AG04450 (cell line): ENCODE measurements at regions of chr1 and their contacts with region 1.

Region 1: GRCh38 chr1:119275145-119276134 is 93.1 kb upstream of the HAO2 start:
- DNase-seq: peak; percentile 32
- H3K4me3 ChIP-seq: no peak overlapping the region
- H3K27ac ChIP-seq: no peak overlapping the region
- H3K27me3 ChIP-seq: no peaks in the 10 kb centered on the region
- CTCF ChIP-seq: peak; percentile 95

Region 2: DNA sequence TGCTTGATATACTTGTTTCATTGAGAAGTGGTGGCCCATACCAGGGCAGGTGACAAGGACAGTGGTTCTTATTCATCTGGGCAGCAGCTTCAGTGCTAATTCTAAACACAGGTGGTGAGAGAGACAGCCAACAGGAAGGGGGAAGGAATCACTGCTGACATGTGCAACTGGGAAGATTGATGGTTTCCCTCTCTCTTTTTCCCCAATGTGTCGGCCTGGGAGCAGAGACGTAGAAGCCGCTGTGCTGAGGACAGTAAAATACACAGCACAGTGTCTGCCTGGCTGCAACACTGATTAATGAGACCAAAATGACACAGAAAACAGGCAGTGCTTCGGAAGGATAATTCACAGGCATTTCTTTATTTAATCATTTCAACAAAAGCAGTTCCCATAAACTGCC is 183.8 kb before region 1 on chr1:
- CTCF ChIA-PET with region 1: no interaction called
- POLR2A ChIA-PET with region 1: no interaction called
- DNase-seq: no peak
- H3K4me3 ChIP-seq: no peak overlapping the region
- H3K27ac ChIP-seq: no peak overlapping the region
- H3K27me3 ChIP-seq: no peaks in the 10 kb centered on the region
- CTCF ChIP-seq: no peak

Region 3: GRCh38 chr1:119140177-119141019 is 135.0 kb before region 1 on chr1 and contains the start of gene WARS2:
- CTCF ChIA-PET with region 1: interaction called, 10 read pairs
- POLR2A ChIA-PET with region 1: no interaction called
- DNase-seq: peak; percentile 93
- H3K4me3 ChIP-seq: peak within 1 kb of the TSS; percentile 78
- H3K27ac ChIP-seq: peak within 1 kb of the TSS; percentile 99
- H3K27me3 ChIP-seq: no peaks in the 10 kb centered on the region
- CTCF ChIP-seq: no peak
- polyA plus RNA-seq, gene WARS2: 12.4 and 12.6 TPM in 2 replicates

Region 4: DNA sequence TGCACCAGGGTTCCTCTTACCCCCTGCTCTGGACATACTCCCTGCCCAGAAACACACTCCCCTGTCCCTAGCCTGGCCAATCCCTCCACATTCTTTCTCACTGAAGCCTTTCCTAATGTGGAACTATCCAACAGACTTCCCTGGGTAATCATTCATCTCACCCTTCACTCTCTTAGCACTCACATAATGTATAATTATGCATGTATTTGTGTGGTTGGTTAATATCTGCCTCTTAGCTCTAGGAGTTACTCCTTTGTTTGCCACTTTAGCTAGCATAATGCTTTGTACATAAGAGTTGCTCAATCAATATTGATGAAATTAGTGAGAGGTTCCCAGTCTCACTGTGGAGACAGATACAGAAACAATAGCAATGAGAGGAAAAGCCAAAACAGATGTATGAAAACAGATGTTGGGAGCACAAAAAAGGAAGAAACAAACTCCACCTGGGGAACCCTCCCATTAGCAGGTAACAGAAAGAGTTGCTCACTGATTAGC is 58.1 kb before region 1 on chr1:
- CTCF ChIA-PET with region 1: interaction called, 10 read pairs
- POLR2A ChIA-PET with region 1: no interaction called
- DNase-seq: no peak
- H3K4me3 ChIP-seq: no peak overlapping the region
- H3K27ac ChIP-seq: no peak overlapping the region
- H3K27me3 ChIP-seq: no peaks in the 10 kb centered on the region
- CTCF ChIP-seq: no peak

Region 5: GRCh38 chr1:119286587-119287181 is 11.2 kb after region 1 on chr1:
- CTCF ChIA-PET with region 1: interaction called, 12 read pairs
- POLR2A ChIA-PET with region 1: no interaction called
- DNase-seq: no peak
- H3K4me3 ChIP-seq: no peak overlapping the region
- H3K27ac ChIP-seq: no peak overlapping the region
- H3K27me3 ChIP-seq: peaks cover 5% of the 10 kb centered on the region
- CTCF ChIP-seq: peak; percentile 32; the same call in 1 of the 2 replicates

Region 6: DNA sequence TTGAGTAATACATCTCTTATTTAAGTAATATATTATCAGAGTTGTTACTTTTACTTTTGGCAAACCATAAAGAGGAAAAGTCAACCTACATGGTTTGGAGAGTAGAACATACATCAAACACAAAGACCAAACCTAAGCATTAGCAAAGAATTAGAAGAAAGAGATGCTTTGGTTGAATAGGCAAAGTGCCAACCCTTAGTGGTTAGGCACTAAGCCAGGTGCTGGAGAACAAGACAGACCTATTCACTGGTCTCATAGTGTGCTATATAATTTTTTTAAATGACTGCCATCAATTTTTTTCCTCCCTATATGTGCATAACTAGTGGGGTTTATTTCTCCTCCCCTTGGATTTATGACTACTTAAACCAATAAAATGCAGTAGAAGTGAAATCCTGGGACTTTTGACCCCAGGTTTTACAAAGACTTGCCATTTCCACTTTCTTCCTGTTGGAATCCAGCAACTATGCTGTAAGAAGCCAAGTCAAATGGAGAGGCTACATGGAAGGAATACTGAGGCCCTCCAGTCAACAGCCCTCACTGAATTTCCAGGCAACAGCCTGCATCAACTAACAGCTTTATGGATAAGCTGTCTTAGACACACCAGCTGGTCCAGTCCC is 23.4 kb after region 1 on chr1:
- CTCF ChIA-PET with region 1: interaction called, 13 read pairs
- POLR2A ChIA-PET with region 1: no interaction called
- DNase-seq: no peak
- H3K4me3 ChIP-seq: no peak overlapping the region
- H3K27ac ChIP-seq: no peak overlapping the region
- H3K27me3 ChIP-seq: peaks cover 8% of the 10 kb centered on the region
- CTCF ChIP-seq: no peak

Region 7: GRCh38 chr1:119367427-119368124 is 92.1 kb after region 1 on chr1:
- CTCF ChIA-PET with region 1: interaction called, 61 read pairs
- POLR2A ChIA-PET with region 1: no interaction called
- DNase-seq: peak; percentile 3
- H3K4me3 ChIP-seq: no peak overlapping the region
- H3K27ac ChIP-seq: no peak overlapping the region
- H3K27me3 ChIP-seq: peaks cover 5% of the 10 kb centered on the region
- CTCF ChIP-seq: peak; percentile 99

Region 8: DNA sequence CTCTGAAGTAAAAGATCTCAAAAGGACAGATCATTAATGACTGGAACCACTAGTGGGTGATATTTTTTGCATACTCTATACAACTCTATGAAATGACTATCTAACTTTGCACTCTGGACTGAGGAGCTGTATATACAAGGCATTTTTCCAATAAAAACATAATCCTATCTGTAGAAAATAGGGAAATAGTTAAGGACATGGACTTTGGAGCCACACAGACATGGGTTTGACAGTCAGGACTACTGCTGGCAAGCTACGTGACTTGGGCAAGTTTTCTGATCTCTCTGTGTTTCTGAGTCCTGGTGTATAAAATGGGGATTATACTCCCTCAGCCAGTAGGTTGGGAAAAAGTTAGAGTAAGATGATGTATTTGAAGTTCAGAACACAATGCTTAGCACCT is 118.6 kb after region 1 on chr1:
- CTCF ChIA-PET with region 1: no interaction called
- POLR2A ChIA-PET with region 1: no interaction called
- DNase-seq: no peak
- H3K4me3 ChIP-seq: no peak overlapping the region
- H3K27ac ChIP-seq: no peak overlapping the region
- H3K27me3 ChIP-seq: no peaks in the 10 kb centered on the region
- CTCF ChIP-seq: no peak